Activated naive CD8-positive, alpha-beta T cell treated with anti-CD3 and anti-CD28 coated beads, Interleukin-2, amount 10 ng/mL, durations not matched to agents 7 days and 5 days (primary cell): ENCODE measurements at regions of chr9 and their contacts with region 1.

Region 1: DNA sequence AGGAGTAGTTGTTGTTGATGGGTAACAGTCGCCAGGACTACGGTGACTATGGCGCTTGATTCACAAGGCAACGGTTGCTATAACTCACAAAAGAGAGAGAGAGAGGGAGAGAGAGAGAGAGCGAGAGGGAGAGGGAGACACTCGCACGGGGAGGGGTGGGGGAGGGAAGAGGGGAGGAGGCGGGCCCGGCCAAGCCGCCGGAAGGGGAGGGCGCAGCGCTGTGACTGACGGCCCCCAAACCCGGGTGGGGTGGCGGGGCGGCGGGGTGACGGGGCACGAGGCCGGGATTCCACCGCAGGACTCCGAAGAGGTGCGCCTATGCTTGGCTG is at the start of gene RFX3:
- DNase-seq: peak; percentile 90
- ATAC-seq: peak; percentile 52
- H3K4me3 Mint-ChIP-seq: peak within 1 kb of the TSS; percentile 90
- H3K27ac Mint-ChIP-seq: peak within 1 kb of the TSS; percentile 97
- H3K4me1 Mint-ChIP-seq: peaks cover 31% of the 10 kb centered on the region
- H3K27me3 Mint-ChIP-seq: no peaks in the 10 kb centered on the region
- total RNA-seq, gene RFX3: 13.5 to 16.2 TPM

Region 2: GRCh38 chr9:3337515-3338225 is 188.1 kb before region 1 on chr9:
- POLR2A ChIA-PET with region 1: no interaction called
- DNase-seq: no peak
- ATAC-seq: peak; percentile 18
- H3K4me3 Mint-ChIP-seq: no peak overlapping the region
- H3K27ac Mint-ChIP-seq: no peak overlapping the region
- H3K4me1 Mint-ChIP-seq: peaks cover 9% of the 10 kb centered on the region
- H3K27me3 Mint-ChIP-seq: no peaks in the 10 kb centered on the region

Region 3: GRCh38 chr9:3441197-3441816 is 84.5 kb before region 1 on chr9:
- POLR2A ChIA-PET with region 1: no interaction called
- DNase-seq: no peak
- ATAC-seq: peak; percentile 82
- H3K4me3 Mint-ChIP-seq: no peak overlapping the region
- H3K27ac Mint-ChIP-seq: no peak overlapping the region
- H3K4me1 Mint-ChIP-seq: no peaks in the 10 kb centered on the region
- H3K27me3 Mint-ChIP-seq: no peaks in the 10 kb centered on the region

Region 4: DNA sequence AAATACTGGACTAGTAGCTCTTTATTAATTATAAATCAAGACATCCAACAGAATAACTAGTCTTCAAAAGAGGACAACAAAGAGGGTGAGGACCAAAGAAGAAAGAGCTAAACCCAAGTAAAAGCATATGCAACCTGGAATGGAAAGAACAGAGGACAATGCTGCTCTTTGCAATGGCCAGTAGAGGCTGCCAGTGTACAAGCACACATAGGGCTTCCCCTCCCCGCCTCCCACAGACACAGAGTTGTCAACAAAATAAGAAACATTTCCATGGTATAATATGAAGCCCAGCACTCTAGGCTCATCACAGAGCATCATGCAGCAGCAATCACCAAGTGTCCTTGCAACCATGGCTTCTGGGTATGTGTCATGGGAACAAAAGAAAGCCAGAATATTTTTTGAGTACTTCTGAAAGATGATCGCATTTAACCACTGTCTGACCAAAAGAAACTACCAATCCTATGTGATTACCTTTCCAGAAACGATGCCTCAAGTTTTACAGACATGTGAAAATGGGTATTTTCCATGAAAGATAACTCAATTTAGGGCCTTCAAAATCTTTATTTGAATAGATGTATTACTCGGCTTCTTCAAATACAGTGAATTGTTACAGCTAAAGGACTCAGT is 58.1 kb before region 1 on chr9:
- POLR2A ChIA-PET with region 1: interaction called, 15 read pairs
- DNase-seq: no peak
- ATAC-seq: peak; percentile 99
- H3K4me3 Mint-ChIP-seq: no peak overlapping the region
- H3K27ac Mint-ChIP-seq: no peak overlapping the region
- H3K4me1 Mint-ChIP-seq: peaks cover 2% of the 10 kb centered on the region
- H3K27me3 Mint-ChIP-seq: no peaks in the 10 kb centered on the region

Region 5: GRCh38 chr9:3473405-3473804 is 52.4 kb before region 1 on chr9:
- POLR2A ChIA-PET with region 1: interaction called, 61 read pairs
- DNase-seq: no peak
- ATAC-seq: peak; percentile 65
- H3K4me3 Mint-ChIP-seq: no peak overlapping the region
- H3K27ac Mint-ChIP-seq: no peak overlapping the region
- H3K4me1 Mint-ChIP-seq: peaks cover 26% of the 10 kb centered on the region
- H3K27me3 Mint-ChIP-seq: no peaks in the 10 kb centered on the region

Region 6: DNA sequence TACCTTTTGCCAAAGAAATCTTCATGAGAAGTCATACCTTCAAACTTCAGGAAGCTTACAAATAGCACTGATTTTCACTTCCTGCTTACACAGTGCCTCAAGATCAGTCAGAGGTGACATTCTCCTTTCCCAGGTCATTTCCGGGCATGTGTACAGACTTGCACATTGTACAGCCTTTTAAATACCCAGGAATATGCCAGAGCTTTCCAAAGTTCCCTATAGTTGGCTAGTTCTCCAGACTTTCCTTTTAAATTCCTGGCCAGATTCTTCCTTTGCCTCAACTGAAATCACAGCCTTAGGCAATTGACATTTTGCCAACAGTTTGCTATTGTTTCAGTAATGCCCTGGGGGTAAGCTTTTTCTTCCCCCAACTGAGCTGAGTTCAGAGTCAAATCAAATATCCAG is 47.2 kb before region 1 on chr9:
- POLR2A ChIA-PET with region 1: interaction called, 61 read pairs
- DNase-seq: no peak
- ATAC-seq: no peak
- H3K4me3 Mint-ChIP-seq: peak overlapping the region; percentile 15
- H3K27ac Mint-ChIP-seq: peak overlapping the region; percentile 30
- H3K4me1 Mint-ChIP-seq: peaks cover 33% of the 10 kb centered on the region
- H3K27me3 Mint-ChIP-seq: no peaks in the 10 kb centered on the region

Region 7: DNA sequence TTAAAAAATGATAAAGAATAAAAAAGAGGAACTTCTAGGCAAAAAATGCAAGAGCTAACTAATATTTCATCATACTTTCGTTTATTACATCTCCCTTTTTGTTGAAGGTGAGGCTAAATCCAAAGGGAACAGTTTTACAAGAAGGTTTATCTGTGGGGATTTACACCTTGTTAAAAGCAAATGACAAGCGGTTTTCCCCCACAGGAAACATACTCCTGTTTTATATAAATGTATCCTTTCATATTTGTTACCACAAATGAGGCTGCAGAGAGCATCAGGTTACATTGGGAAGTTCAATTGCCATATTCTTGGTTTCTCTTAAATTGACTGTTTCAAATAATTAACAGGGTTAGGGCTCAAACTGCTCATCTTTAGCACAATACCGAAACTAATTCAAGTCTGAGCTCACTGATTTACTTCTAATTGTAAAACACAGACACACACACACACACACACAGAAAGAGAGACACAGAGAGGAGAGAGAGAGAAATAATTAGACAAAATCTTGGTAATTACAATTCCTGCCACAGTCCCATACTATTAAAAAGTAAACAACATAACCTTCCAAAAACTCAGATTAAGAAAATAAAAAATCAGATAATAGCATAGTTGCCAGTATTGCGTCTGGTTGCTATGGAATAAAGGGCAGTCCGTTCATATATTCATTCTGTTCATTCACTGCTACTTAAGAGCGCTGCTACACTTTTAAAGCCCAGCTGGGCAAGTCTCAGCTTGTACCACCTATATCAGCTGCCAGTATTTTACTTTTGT is 17.1 kb before region 1 on chr9:
- POLR2A ChIA-PET with region 1: interaction called, 10 read pairs
- DNase-seq: no peak
- ATAC-seq: no peak
- H3K4me3 Mint-ChIP-seq: peak overlapping the region; percentile 28
- H3K27ac Mint-ChIP-seq: peak overlapping the region; percentile 19
- H3K4me1 Mint-ChIP-seq: peaks cover 16% of the 10 kb centered on the region
- H3K27me3 Mint-ChIP-seq: no peaks in the 10 kb centered on the region